ENCODE measurements at regions of chr1 and their contacts with region 1.

Region 1: GRCh38 chr1:239619190-239619589 is 232.8 kb downstream of the CHRM3 start:
- DNase-seq: no peak
- H3K4me3 ChIP-seq: no peak overlapping the region
- H3K27ac ChIP-seq: no peak overlapping the region
- H3K4me1 ChIP-seq: peaks cover 9% of the 10 kb centered on the region; the same call in 1 of the 2 replicates
- H3K27me3 ChIP-seq: no peaks in the 10 kb centered on the region
- CTCF ChIP-seq: no peak

Region 2: DNA sequence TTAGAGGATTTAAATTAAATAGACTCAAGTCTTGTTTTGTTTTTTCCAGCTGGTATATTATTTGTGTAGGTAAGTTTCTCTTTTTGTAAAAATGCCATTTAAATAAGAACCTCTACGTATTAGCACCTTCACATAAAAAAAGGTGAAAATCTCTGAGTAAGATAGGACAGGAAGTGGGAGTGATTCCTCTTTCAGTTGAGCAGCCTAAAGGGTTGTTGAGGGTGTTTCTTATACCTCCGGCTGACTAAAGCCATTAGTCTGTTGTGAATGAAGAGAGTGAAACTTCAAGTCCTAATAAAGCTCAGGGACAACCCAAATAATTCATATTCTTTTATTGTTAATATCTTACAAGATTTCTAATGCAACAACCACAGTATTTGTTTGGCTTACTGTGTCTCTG is 44.1 kb before region 1 on chr1:
- CTCF ChIA-PET with region 1: no interaction called
- POLR2A ChIA-PET with region 1: no interaction called
- intact Hi-C with region 1: no loop called
- DNase-seq: no peak
- H3K4me3 ChIP-seq: no peak overlapping the region
- H3K27ac ChIP-seq: no peak overlapping the region
- H3K4me1 ChIP-seq: no peaks in the 10 kb centered on the region
- H3K27me3 ChIP-seq: no peaks in the 10 kb centered on the region
- CTCF ChIP-seq: no peak

Region 3: DNA sequence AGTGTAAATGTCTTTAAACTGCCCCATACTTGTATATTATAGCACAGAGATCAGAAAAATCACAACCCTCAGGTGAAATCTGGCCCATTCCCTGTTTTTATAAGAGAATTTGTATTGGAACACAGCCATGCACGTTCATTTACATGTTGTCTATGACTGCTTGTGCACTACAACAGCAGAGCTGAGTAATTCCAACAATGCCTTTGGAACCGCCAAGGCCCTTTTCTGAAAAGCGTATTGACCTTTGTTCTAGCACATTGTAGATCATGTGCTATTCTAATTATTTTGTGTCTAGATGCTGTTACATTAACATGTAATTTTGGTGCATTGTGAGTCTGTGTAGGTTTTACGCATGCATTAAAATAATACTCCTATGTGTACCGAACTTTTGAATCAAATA is 106.7 kb after region 1 on chr1:
- CTCF ChIA-PET with region 1: interaction called, 13 read pairs
- POLR2A ChIA-PET with region 1: no interaction called
- intact Hi-C with region 1: no loop called
- DNase-seq: no peak
- H3K4me3 ChIP-seq: no peak overlapping the region
- H3K27ac ChIP-seq: no peak overlapping the region
- H3K4me1 ChIP-seq: peaks cover 11% of the 10 kb centered on the region
- H3K27me3 ChIP-seq: no peaks in the 10 kb centered on the region
- CTCF ChIP-seq: no peak